ENCODE measurements at regions of chr3 and their contacts with region 1.

Region 1: GRCh38 chr3:10983219-10983916 is 9.2 kb upstream of the SLC6A1 start:
- H3K4me3 ChIP-seq: no peak overlapping the region
- H3K27ac ChIP-seq: no peak overlapping the region
- H3K4me1 ChIP-seq: peaks cover 2% of the 10 kb centered on the region; the same call in 1 of the 2 replicates
- CTCF ChIP-seq: peak; percentile 67; the same call in 1 of the 2 replicates

Region 2: DNA sequence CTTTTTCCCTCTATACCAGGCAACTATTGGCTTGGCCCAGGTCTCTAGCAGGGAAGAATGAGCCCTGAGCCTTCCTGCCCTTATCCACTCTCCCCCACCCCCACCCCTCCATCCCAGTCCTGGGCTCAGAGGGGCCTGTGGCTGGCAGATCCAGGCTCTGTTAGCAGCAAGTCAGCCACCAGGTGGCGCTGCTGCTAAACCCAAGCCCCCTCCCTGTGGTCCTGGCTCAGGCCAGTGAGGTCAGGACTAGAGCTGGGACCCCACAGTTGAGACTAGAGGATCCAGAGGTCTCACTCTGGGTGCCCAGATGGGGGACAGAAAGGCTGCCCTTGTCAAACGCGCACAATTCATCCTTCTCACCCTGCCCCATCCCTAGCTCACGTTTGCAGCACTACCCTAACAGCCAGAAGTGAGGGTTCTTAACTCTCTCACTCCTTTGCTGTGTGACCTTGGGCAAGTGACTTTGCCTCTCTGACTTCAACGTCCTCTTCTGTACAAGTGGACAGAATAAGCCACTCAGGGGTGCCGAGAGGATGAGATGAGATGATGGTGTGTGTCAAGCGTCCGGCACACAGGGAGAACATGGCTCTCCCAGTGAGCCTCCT is 37.6 kb before region 1 on chr3:
- CTCF ChIA-PET with region 1: interaction called, 23 read pairs
- POLR2A ChIA-PET with region 1: no interaction called
- H3K4me3 ChIP-seq: no peak overlapping the region
- H3K27ac ChIP-seq: no peak overlapping the region
- H3K4me1 ChIP-seq: no peaks in the 10 kb centered on the region
- CTCF ChIP-seq: peak; percentile 77

Region 3: GRCh38 chr3:10952526-10952925 is 30.8 kb before region 1 on chr3:
- CTCF ChIA-PET with region 1: interaction called, 23 read pairs
- POLR2A ChIA-PET with region 1: no interaction called
- H3K4me3 ChIP-seq: no peak overlapping the region
- H3K27ac ChIP-seq: no peak overlapping the region
- H3K4me1 ChIP-seq: no peaks in the 10 kb centered on the region
- CTCF ChIP-seq: no peak

Region 4: GRCh38 chr3:10964537-10965167 is 18.7 kb before region 1 on chr3:
- CTCF ChIA-PET with region 1: interaction called, 14 read pairs
- POLR2A ChIA-PET with region 1: no interaction called
- H3K4me3 ChIP-seq: no peak overlapping the region
- H3K27ac ChIP-seq: no peak overlapping the region
- H3K4me1 ChIP-seq: no peaks in the 10 kb centered on the region
- CTCF ChIP-seq: no peak

Region 5: GRCh38 chr3:10996345-10997013 is 13.1 kb after region 1 on chr3:
- CTCF ChIA-PET with region 1: interaction called, 10 read pairs
- POLR2A ChIA-PET with region 1: no interaction called
- H3K4me3 ChIP-seq: no peak overlapping the region
- H3K27ac ChIP-seq: no peak overlapping the region
- H3K4me1 ChIP-seq: no peaks in the 10 kb centered on the region
- CTCF ChIP-seq: no peak

Region 6: DNA sequence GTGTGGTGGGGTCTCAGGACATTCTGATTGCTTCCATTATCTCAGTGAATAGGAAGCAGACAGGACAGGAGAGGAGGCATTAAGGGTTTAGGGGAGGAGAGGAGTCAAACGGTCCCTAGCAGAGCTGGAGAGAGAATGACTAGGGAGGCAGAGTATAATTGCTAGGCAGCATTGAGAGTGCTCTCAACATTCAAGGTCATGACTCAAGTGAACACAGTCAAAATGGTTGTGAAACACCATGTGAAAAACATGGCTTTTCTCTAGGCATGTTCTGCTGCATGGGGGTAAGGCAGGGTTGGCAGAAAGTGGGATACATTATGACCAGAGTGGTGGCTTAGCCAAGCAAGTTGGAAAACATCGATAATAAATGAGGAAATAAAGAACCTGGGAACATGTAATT is 151.4 kb after region 1 on chr3:
- CTCF ChIA-PET with region 1: no interaction called
- POLR2A ChIA-PET with region 1: no interaction called
- H3K4me3 ChIP-seq: no peak overlapping the region
- H3K27ac ChIP-seq: no peak overlapping the region
- H3K4me1 ChIP-seq: no peaks in the 10 kb centered on the region
- CTCF ChIP-seq: no peak

Region 7: GRCh38 chr3:11323813-11324212 is 340.4 kb after region 1 on chr3:
- CTCF ChIA-PET with region 1: no interaction called
- POLR2A ChIA-PET with region 1: no interaction called
- H3K4me3 ChIP-seq: no peak overlapping the region
- H3K27ac ChIP-seq: no peak overlapping the region
- H3K4me1 ChIP-seq: no peaks in the 10 kb centered on the region
- CTCF ChIP-seq: no peak

Measured in HEK293 (cell line).